ENCODE measurements at regions of chr1 and their contacts with region 1.

Region 1: GRCh38 chr1:193121616-193122593 is at the start of gene CDC73:
- DNase-seq: peak; percentile 100
- H3K4me3 ChIP-seq: peak within 1 kb of the TSS; percentile 53 to 87 (median 68)
- H3K27ac ChIP-seq: peak within 1 kb of the TSS; percentile 85 to 99 (median 97)
- H3K4me1 ChIP-seq: peaks cover 15 to 53% (median 46%) of the 10 kb centered on the region in 6 donors
- H3K27me3 ChIP-seq: no peaks in the 10 kb centered on the region
- CTCF ChIP-seq: peak; percentile 95 to 99 (median 99)
- POLR2A ChIP-seq: peak; percentile 45 to 75 (median 56)
- total RNA-seq, gene CDC73: 32.4 to 76.7 (median 62.7) TPM

Region 2: DNA sequence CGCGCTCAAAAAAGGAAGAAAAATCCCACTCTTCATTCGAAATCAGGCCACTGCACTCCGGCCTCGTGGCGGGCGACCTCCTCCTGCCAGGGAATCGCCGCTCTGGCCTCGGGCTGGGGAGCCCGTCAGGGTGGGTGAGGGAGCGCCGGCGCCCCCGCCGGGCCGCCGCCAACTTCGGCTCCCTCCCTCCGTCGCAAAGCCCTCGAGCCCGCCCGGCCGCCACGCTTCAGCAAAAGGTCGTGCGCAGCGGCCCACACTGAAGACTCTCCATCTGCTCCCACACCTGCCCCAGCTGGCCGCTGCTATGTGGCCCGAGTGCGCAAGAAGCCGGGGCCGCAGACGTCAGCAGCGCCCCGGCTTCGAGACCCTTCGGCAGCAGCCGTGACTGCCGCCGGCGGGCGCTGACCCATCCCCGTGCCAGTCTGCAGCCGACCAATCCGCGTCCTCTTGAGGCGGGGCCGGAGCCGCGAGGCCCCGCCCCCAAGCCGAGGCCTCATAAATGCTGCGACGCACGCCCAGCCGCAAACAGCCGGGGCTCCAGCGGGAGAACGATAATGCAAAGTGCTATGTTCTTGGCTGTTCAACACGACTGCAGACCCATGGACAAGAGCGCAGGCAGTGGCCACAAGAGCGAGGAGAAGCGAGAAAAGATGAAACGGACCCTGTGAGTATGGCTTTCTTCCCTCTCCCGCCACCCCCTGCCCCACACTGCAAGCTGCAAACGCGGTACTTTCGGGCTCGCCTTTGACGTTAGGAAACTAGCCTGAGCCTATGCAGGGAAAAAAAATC is 313.2 kb before region 1 on chr1 and contains the start of gene RGS2:
- intact Hi-C with region 1: loop called (anchors 5 kb)
- DNase-seq: peak; percentile 98
- H3K4me3 ChIP-seq: peak within 1 kb of the TSS; percentile 61 to 85 (median 64)
- H3K27ac ChIP-seq: peak within 1 kb of the TSS; percentile 75 to 98 (median 95)
- H3K4me1 ChIP-seq: peaks cover 3 to 70% (median 48%) of the 10 kb centered on the region in 6 donors
- H3K27me3 ChIP-seq: no peaks in the 10 kb centered on the region
- CTCF ChIP-seq: peak in 3 of 11 experiments; percentile 4 to 30 (median 24)
- POLR2A ChIP-seq: peak; percentile 97 to 99 (median 98)
- total RNA-seq, gene RGS2: 144 to 377 (median 175) TPM

Region 3: GRCh38 chr1:193059268-193060225 is 62.4 kb before region 1 on chr1 and contains the starts of genes RO60 and UCHL5:
- intact Hi-C with region 1: loop called (anchors 10 kb)
- DNase-seq: peak; percentile 99
- H3K4me3 ChIP-seq: peak within 1 kb of the TSS; percentile 66 to 79 (median 73)
- H3K27ac ChIP-seq: peak within 1 kb of the TSS; percentile 92 to 99 (median 97)
- H3K4me1 ChIP-seq: peaks cover 31 to 76% (median 55%) of the 10 kb centered on the region in 6 donors
- H3K27me3 ChIP-seq: no peaks in the 10 kb centered on the region
- CTCF ChIP-seq: peak in 3 of 11 experiments; percentile 20 to 35 (median 34)
- POLR2A ChIP-seq: peak; percentile 13 to 81 (median 38)
- total RNA-seq, gene RO60: 65.3 to 87.1 (median 81.5) TPM
- total RNA-seq, gene UCHL5: 29.4 to 41.7 (median 36.9) TPM

Region 4: DNA sequence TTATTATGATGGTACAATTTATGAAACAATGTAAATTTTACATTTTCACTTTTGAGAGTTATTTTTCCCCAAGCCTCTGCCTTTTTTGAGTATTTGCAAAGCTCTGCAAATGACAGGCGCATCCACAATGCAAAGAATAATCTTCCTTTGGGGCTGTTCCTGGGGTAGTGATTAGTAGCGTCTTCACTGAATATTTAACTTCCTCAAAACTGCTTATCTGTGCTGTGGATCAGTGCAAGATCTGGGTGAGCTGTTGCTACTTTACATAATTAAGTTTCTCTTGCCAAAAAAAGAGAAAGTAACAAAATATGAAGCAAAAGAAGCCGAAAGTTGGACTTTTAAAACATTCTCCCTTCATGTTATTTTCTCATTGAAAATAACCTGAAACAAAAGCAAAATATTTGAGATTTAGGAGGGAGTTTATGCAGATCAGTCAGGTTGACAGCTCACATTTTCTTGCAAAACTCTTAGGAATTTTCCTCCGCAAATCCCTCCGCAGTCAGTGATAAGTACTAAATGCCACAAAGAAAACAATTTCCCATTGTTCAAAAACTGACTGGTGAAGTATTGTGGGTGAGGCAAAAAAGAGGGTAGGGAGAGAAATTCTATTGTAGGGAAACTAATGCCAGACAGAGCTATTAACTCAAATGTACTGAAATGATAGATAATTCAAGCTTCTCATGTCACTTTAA is 340.9 kb after region 1 on chr1:
- intact Hi-C with region 1: no loop called
- DNase-seq: no peak
- H3K4me3 ChIP-seq: peak overlapping the region in 1 of 8 donors; percentile 18
- H3K27ac ChIP-seq: peak overlapping the region in 5 of 8 donors; percentile 3 to 63 (median 36)
- H3K4me1 ChIP-seq: peaks cover 5 to 23% (median 12%) of the 10 kb centered on the region in 6 donors
- H3K27me3 ChIP-seq: no peaks in the 10 kb centered on the region
- CTCF ChIP-seq: no peak
- POLR2A ChIP-seq: no peak

Measured in spleen (tissue), 13 donors.